ENCODE measurements at regions of chr21 and their contacts with region 1.

Region 1: GRCh38 chr21:33619726-33620125 is 21.8 kb downstream of the CRYZL1 start:
- DNase-seq: no peak

Region 2: DNA sequence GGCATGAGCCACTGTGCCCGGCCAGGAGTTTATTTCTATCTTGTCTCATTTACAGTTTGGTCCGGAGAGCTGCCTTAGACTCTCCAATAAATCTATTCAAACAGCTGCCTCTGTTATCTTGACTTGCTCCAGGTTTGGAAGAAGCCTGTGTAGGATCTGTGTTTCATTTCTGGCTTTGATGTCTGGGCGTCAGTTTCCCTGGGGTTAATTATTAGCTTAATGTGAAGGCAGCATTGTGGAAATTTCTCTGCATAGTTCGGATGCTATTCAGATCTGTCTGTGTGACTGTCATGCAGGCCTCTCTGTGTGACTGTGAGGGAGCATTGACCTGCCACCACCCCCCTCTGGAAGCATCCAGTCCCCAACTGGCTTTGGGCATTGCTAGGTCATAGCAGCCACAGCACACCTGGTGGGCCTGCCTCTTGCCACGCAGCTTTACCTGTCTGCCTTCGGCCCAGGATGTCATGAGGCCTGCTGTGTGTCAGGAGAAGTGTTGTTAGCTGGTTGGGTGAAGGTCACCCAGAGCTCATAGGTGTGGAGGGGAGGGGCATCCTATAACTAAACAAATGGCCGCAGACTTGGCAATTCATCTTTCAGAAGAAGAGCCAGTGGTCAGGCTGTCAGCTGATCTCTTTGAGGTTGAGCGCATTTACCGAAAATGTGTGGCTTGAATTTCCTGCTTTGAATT is 206.8 kb before region 1 on chr21:
- CTCF ChIA-PET with region 1: interaction called, 11 read pairs
- POLR2A ChIA-PET with region 1: no interaction called
- DNase-seq: no peak

Measured in HEK293T (cell line).